Aorta (tissue), 5 donors: ENCODE measurements at regions of chr19 and their contacts with region 1.

Region 1: GRCh38 chr19:54218960-54219661 is 3.7 kb downstream of the LILRB3 start:
- DNase-seq: peak in 1 of 2 donors; percentile 42
- ATAC-seq: no peak
- H3K4me3 ChIP-seq: no peak overlapping the region
- H3K27ac ChIP-seq: no peak overlapping the region
- H3K4me1 ChIP-seq: no peaks in the 10 kb centered on the region
- H3K27me3 ChIP-seq: no peaks in the 10 kb centered on the region

Region 2: DNA sequence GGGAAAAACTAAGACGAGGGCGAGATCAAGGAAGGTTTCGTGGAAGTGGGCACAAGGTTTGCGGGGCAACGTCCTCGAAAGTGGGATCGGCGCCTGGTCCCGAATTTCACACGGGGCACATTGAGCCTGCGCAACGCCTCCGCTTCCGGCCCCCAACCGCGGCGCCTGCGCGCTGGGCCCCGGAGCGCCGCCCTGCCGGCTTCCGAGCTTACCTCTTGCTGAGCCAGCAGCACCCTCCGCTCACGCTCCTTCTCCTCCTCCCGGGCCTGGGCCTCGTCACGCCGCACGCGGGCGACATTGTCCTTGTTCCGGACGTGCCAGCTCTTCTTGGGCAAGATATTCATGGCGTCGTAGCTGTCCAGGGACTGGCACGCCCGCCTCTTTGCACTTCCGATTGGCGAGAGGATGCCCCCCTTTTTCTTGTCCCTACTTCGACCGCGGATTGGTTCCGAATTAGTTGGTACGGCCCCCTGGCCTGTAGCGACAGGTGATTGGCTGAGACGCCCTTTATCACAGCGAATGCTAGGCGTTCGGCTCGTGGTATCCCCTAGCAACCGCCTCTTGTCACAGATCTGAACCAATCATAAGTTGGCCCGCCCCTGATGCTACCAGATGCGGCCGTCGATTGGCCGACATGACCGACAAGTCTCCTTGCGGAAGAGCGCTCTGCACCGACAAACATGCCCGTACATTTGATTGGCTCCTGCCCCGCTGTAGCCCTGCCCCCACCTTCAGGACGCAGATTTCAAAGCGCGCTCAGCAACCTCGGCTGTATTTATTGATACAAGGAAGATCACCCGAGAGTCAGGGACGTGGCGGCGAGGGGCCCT is 59.5 kb before region 1 on chr19 and contains the start of gene LENG1:
- intact Hi-C with region 1: no loop called
- DNase-seq: peak; percentile 98 to 100
- ATAC-seq: peak; percentile 97
- H3K4me3 ChIP-seq: peak within 1 kb of the TSS; percentile 47 to 51
- H3K27ac ChIP-seq: peak within 1 kb of the TSS in 1 of 2 donors; percentile 96
- H3K4me1 ChIP-seq: no peaks in the 10 kb centered on the region
- H3K27me3 ChIP-seq: no peaks in the 10 kb centered on the region
- total RNA-seq, gene LENG1: 5.7 to 6.0 TPM

Region 3: DNA sequence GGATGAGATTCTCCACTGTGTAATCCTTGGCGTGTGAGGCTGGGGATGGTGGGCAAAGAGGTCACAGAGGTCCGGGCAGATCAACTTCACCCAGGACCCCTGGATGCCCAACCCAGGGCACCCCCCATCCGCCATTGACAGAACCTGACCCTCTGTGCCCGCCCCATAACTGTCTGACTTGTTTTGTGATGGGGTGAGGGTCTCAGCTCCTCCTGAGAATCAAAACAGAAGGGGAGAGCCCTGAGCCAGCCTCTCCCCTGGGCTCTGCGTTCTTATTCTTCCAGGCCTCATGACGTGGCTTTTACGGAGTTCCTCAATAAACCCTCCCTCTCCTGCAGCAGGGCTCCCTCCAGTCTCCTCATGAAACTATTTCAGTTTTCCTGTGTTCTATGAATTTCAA is 19.9 kb after region 1 on chr19:
- intact Hi-C with region 1: loop called in 1 of 2 experiments (anchors 2 kb)
- DNase-seq: no peak
- ATAC-seq: no peak
- H3K4me3 ChIP-seq: no peak overlapping the region
- H3K27ac ChIP-seq: no peak overlapping the region
- H3K4me1 ChIP-seq: no peaks in the 10 kb centered on the region
- H3K27me3 ChIP-seq: no peaks in the 10 kb centered on the region